Calu3 (cell line): ENCODE measurements at regions of chr2 and their contacts with region 1.

Region 1: GRCh38 chr2:156332534-156333273 is at the start of gene NR4A2:
- DNase-seq: peak; percentile 89
- H3K4me3 Mint-ChIP-seq: peak within 1 kb of the TSS; percentile 92
- H3K27ac Mint-ChIP-seq: peak within 1 kb of the TSS; percentile 97
- H3K4me1 Mint-ChIP-seq: peaks cover 9% of the 10 kb centered on the region
- H3K27me3 Mint-ChIP-seq: no peaks in the 10 kb centered on the region
- CTCF ChIP-seq: no peak
- total RNA-seq, gene NR4A2: 4.9 and 6.2 TPM in 2 replicates

Region 2: GRCh38 chr2:155377266-155377680 is 955.4 kb before region 1 on chr2:
- CTCF ChIA-PET with region 1: interaction called, 6 read pairs
- intact Hi-C with region 1: loop called (anchors 1 kb)
- DNase-seq: no peak
- H3K4me3 Mint-ChIP-seq: no peak overlapping the region
- H3K27ac Mint-ChIP-seq: no peak overlapping the region
- H3K4me1 Mint-ChIP-seq: no peaks in the 10 kb centered on the region
- H3K27me3 Mint-ChIP-seq: no peaks in the 10 kb centered on the region
- CTCF ChIP-seq: peak; percentile 14

Region 3: DNA sequence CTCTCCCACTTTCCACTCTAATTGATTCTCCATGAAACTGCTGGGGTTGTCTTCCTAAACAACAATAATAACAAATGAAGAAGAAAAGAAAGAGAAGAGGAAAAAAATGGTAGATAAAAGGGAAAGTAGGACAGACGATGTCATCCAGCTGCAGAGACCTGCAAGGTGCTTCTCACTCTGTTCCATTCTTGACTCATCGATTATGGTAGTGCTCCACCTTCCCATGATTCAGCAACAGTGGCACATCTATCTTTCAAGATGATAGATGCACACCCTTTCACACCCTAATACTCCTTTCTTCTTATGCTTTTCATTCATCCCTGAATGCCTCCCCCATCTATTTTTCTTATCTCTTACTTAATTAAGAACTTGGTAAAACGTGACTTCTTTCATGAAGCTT is 610.4 kb before region 1 on chr2:
- CTCF ChIA-PET with region 1: interaction called, 10 read pairs
- intact Hi-C with region 1: no loop called
- DNase-seq: no peak
- H3K4me3 Mint-ChIP-seq: no peak overlapping the region
- H3K27ac Mint-ChIP-seq: no peak overlapping the region
- H3K4me1 Mint-ChIP-seq: no peaks in the 10 kb centered on the region
- H3K27me3 Mint-ChIP-seq: no peaks in the 10 kb centered on the region
- CTCF ChIP-seq: no peak

Region 4: DNA sequence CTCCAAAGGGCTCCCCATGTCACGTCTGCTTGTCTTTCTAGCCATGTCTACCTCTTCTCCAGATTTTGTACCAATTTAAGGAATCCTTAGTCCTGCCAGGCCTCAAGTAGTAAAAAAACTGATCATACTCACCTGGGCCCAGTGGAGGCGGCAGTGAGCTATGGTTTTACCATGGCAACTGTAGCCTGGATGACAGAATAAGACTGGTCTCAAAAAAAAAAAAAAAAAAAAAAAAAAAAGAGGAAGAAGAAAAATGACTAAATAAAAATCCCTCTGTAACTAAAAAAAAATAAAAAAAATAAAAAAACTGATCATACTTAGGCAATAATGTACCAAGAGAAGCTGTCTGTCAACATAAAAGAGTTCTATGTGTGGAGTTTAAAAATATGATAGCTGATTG is 221.8 kb before region 1 on chr2:
- CTCF ChIA-PET with region 1: no interaction called
- intact Hi-C with region 1: loop called (anchors 5 kb)
- DNase-seq: peak; percentile 37
- H3K4me3 Mint-ChIP-seq: no peak overlapping the region
- H3K27ac Mint-ChIP-seq: no peak overlapping the region
- H3K4me1 Mint-ChIP-seq: no peaks in the 10 kb centered on the region
- H3K27me3 Mint-ChIP-seq: no peaks in the 10 kb centered on the region
- CTCF ChIP-seq: no peak

Region 5: DNA sequence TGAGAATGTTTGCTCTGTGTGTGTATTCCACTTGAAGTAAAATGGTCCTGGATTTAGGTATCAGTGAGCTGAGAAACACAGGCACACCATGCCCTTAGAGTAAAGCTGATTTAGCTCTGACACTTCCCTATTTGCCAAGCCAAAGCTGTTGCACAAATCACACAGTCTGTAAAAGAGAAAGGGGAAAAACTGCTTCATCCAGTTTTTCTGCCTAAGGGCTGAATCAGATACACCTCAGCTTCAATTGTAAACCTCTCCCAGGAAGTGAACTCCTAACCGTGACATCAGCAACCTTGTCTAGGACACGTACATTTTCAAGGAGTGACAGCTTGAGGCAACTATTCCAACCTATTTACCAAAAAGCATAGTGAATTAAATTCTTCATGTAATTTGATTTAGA is 150.6 kb before region 1 on chr2:
- CTCF ChIA-PET with region 1: interaction called, 4 read pairs
- intact Hi-C with region 1: loop called (anchors 1 kb)
- DNase-seq: peak; percentile 75
- H3K4me3 Mint-ChIP-seq: peak overlapping the region; percentile 36
- H3K27ac Mint-ChIP-seq: peak overlapping the region; percentile 95
- H3K4me1 Mint-ChIP-seq: peaks cover 35% of the 10 kb centered on the region
- H3K27me3 Mint-ChIP-seq: no peaks in the 10 kb centered on the region
- CTCF ChIP-seq: no peak

Region 6: DNA sequence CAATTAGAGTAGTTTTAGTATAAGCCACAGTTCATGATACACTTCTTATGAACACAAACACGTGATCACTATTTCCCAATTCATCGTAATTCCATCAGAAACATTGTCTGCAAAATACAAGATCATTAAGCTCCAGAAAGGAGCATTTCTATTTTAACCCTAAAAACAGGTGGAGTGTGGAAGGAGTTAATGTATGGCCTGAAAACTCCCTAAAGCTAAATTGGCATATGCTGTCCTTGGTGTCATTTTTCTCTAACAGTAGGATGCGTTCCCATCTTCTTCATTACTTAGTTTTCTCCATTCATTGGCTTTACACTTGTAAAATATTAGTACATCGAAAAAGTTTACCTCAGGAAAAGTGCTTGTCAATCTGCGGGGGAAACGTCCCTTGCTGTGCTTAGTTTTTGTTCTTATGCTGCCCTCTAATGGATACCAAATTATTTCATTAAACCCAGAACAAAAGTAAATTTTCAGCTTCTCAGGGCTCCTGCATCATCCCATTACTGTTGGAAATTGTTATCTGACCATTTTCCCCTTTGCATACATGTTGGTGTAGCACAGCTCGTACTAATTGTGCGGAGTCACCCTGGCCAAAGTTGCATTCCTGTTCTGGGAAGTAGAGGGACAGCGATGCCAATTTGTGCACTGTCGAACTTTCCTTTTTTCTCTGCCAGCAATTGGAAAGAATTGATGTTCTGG is 256.8 kb after region 1 on chr2:
- CTCF ChIA-PET with region 1: interaction called, 18 read pairs
- intact Hi-C with region 1: loop called (anchors 2 kb)
- DNase-seq: peak; percentile 6
- H3K4me3 Mint-ChIP-seq: no peak overlapping the region
- H3K27ac Mint-ChIP-seq: no peak overlapping the region
- H3K4me1 Mint-ChIP-seq: no peaks in the 10 kb centered on the region
- H3K27me3 Mint-ChIP-seq: no peaks in the 10 kb centered on the region
- CTCF ChIP-seq: peak; percentile 28

Region 7: GRCh38 chr2:157194097-157194688 is 861.5 kb after region 1 on chr2:
- CTCF ChIA-PET with region 1: interaction called, 7 read pairs
- intact Hi-C with region 1: loop called (anchors 10 kb)
- DNase-seq: peak; percentile 28
- H3K4me3 Mint-ChIP-seq: no peak overlapping the region
- H3K27ac Mint-ChIP-seq: peak overlapping the region; percentile 77
- H3K4me1 Mint-ChIP-seq: peaks cover 16% of the 10 kb centered on the region
- H3K27me3 Mint-ChIP-seq: no peaks in the 10 kb centered on the region
- CTCF ChIP-seq: peak; percentile 41